Activated naive CD4-positive, alpha-beta T cell treated with anti-CD3 and anti-CD28 coated beads for 36 hours (primary cell): ENCODE measurements at regions of chr2 and their contacts with region 1.

Region 1: DNA sequence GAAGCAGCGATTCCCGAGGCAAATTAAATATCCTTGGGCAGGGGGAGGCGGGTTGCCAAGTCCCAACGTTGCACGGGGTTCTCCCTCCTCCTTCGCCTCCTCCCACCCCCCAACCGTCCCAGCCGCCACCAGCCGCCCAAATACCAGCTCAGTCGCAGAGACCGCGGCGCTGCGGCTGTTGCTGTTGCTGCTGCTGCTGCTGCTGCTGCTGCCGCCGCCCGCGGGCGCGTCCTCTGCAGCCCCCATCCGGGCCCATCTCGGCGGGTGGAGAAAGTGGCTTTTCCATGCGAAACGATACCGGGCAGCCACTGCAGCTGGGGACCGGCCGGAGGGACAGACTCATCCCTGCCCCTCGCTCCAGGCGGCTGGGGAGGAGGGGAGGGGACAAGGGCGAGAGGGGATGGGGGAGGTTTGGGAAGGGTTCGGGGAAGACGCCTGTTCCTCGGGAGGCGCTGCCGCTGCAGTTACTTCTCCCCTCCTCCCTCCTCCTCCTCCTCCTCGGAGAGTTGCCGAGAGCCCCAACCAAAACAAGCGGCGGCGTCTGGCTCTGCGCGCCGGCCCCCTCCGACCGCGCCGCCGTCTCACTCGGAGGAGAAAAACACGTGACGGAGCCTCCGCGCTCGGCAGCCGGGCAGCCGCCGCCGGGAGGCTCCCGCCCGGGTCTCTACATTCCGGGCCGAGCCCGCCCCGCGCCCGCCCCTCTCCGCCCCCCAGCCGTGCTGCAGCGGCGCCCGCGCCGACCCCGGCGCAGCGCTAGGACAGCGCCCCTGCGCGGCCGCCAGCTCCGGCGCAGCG is at the start of gene IRS1:
- DNase-seq: peak; percentile 53
- H3K4me3 Mint-ChIP-seq: peak within 1 kb of the TSS; percentile 83
- H3K27ac Mint-ChIP-seq: peak within 1 kb of the TSS; percentile 44
- H3K4me1 Mint-ChIP-seq: peaks cover 22% of the 10 kb centered on the region
- H3K27me3 Mint-ChIP-seq: peaks cover 1% of the 10 kb centered on the region
- total RNA-seq, gene IRS1: 2.6 to 2.7 TPM

Region 2: DNA sequence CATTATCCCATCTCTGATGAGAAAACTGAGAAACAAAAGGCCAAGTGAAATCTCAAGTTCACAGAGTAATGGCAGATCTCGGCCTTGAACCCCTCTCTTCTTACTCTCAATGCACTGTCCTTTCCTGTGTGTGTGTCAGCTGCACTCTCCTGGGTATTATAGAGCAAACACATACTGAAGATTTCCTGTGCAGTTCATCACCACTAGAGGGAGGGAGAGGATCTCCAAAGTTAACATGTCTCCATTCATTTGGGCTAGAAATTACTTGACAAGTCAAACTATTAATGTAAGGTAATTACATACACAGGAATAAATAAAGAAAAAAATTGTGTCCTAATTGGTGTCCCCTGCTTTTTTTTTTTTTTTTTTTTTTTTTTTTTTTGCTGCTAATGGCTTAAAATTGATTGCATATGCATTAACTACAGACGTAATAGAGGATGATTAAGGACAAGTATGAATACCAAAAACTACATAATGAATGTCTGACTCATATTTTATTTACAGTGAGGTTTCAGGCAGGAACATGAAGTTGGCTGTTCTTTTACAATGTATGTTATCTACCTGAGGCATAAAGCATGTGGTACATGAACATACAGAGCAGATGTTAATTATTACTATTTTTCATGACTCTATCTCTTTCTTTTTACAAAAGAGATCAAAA is 1130.6 kb before region 1 on chr2:
- CTCF ChIA-PET with region 1: interaction called, 5 read pairs
- intact Hi-C with region 1: loop called (anchors 1 kb)
- DNase-seq: peak; percentile 14
- H3K4me3 Mint-ChIP-seq: no peak overlapping the region
- H3K27ac Mint-ChIP-seq: no peak overlapping the region
- H3K4me1 Mint-ChIP-seq: no peaks in the 10 kb centered on the region
- H3K27me3 Mint-ChIP-seq: peaks cover 5% of the 10 kb centered on the region

Region 3: DNA sequence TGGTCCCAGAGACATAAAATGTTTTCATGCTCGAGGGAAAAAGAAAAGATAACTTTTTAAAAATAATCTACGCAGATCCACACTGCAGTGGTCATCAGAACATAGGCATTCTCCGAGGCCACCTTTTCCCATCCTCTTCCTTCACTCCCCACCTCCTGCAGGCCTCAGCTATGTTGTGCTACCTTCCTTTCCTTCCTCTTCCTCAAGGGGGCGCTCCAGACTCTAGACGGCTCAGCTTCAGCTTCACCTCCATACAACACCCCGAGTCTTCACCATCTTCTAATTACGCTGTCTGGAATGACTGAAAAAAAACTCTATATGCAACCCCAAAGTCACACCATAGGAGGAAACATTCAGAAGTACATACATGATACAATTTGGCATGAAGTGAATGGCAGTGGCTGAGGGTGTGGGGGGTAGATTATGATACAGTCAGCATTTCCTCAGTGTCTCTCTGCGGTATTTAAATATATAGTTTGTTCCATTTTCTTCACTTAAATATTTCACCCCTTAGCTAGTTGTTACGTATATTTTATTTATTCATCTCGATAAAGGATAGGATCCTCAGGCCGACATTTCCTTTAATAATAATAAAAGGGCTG is 583.4 kb before region 1 on chr2:
- CTCF ChIA-PET with region 1: interaction called, 8 read pairs
- intact Hi-C with region 1: loop called (anchors 1 kb)
- DNase-seq: peak; percentile 80
- H3K4me3 Mint-ChIP-seq: no peak overlapping the region
- H3K27ac Mint-ChIP-seq: no peak overlapping the region
- H3K4me1 Mint-ChIP-seq: no peaks in the 10 kb centered on the region
- H3K27me3 Mint-ChIP-seq: no peaks in the 10 kb centered on the region

Region 4: DNA sequence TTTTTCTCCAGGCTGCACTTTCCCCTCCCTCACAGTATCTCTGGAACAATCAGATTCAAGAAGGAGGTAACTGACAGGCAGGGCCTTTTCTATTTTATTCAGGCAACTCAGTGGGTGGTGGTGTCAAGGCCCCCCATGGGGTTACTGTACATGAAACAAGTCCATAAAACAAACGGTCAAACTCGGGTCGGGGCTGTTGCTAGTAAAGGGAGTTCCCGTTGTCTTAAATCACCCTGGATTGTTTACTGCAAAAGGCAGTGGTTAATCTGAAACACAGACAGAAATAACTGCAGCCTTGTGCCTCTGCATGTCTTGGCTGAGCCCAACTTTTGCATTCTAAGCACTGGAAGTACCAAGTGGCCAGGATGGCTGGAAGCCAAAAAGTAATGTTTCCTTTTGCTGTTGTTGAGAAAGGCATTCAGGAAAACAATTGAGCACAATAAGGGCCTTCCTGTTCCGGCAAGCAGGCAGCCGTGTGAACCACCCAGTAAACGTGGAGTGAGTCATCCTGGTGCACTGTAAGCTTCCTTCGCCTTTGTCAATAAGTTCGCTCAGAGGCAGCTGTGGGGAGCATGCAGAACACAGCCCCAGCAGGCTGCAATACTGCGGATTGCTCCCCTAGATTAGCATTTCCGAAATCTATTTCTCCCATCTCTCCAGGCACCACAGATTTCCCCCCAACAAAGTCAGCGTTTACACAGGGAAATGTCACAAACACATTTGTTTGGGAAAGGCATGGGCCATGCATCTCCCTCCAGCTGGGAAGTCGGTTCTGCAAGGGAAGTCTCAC is 149.3 kb before region 1 on chr2:
- CTCF ChIA-PET with region 1: interaction called, 3 read pairs
- intact Hi-C with region 1: loop called (anchors 2 kb)
- DNase-seq: peak; percentile 74
- H3K4me3 Mint-ChIP-seq: no peak overlapping the region
- H3K27ac Mint-ChIP-seq: peak overlapping the region; percentile 50
- H3K4me1 Mint-ChIP-seq: peaks cover 25% of the 10 kb centered on the region
- H3K27me3 Mint-ChIP-seq: peaks cover 3% of the 10 kb centered on the region

Region 5: DNA sequence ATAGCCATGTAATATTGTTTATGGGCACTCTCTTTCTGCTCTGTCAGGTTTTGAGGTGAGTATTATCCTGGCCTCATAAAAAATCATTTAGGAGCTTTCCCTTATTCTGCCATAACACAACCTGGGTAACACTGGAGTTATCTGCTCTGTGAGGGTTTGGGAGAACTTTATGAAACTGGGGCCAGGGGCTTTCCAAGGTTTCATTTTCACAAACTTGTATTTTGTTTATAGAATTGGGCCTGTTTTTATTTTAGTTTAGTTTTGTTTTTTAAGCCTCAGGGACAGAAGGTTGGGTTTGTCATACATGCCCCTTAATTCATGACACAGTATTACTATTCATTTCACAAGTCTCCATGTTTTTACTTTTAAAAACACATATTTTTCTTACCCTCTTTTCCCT is 83.3 kb before region 1 on chr2:
- CTCF ChIA-PET with region 1: no interaction called
- intact Hi-C with region 1: no loop called
- DNase-seq: no peak
- H3K4me3 Mint-ChIP-seq: no peak overlapping the region
- H3K27ac Mint-ChIP-seq: no peak overlapping the region
- H3K4me1 Mint-ChIP-seq: no peaks in the 10 kb centered on the region
- H3K27me3 Mint-ChIP-seq: peaks cover 2% of the 10 kb centered on the region

Region 6: GRCh38 chr2:226984750-226985582 is 185.6 kb after region 1 on chr2:
- CTCF ChIA-PET with region 1: interaction called, 4 read pairs
- intact Hi-C with region 1: loop called (anchors 1 kb)
- DNase-seq: peak; percentile 45
- H3K4me3 Mint-ChIP-seq: no peak overlapping the region
- H3K27ac Mint-ChIP-seq: no peak overlapping the region
- H3K4me1 Mint-ChIP-seq: peaks cover 19% of the 10 kb centered on the region
- H3K27me3 Mint-ChIP-seq: no peaks in the 10 kb centered on the region

Region 7: GRCh38 chr2:227238238-227239237 is 439.2 kb after region 1 on chr2:
- CTCF ChIA-PET with region 1: interaction called, 3 read pairs
- intact Hi-C with region 1: loop called (anchors 5 kb)
- DNase-seq: peak; percentile 82
- H3K4me3 Mint-ChIP-seq: no peak overlapping the region
- H3K27ac Mint-ChIP-seq: no peak overlapping the region
- H3K4me1 Mint-ChIP-seq: no peaks in the 10 kb centered on the region
- H3K27me3 Mint-ChIP-seq: peaks cover 7% of the 10 kb centered on the region